Esophagus squamous epithelium (tissue), 5 donors: ENCODE measurements at regions of chr12 and their contacts with region 1.

Region 1: DNA sequence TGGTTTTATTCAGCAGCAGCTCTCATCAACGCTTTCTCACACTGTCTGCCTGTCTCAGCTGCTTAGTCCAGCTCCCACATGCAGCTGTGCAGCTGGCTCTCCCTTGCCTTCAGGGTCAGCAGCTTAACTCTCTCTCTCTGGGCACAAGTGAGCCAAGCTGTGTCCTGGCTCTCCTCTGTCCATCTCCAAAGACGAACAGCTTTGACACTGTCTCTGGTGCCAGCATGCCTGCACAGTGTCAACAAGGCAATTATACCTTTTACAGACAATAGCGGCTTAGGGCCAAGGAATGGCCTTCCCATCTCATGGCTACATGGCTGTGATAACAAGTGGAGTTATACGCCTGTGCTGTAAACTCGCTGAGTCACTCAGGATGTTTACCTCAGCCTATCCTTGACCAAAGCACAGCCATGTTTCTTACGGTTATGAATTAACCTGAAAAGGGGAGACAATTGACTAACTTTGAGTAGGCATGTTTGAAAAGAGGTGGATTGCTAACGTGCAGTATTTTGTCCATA is 38.4 kb upstream of the MANSC4 start:
- DNase-seq: no peak
- H3K4me3 ChIP-seq: no peak overlapping the region
- H3K27ac ChIP-seq: no peak overlapping the region
- H3K4me1 ChIP-seq: peaks cover 0 to 15% (median 0%) of the 10 kb centered on the region in 3 donors
- H3K27me3 ChIP-seq: no peaks in the 10 kb centered on the region
- CTCF ChIP-seq: no peak
- POLR2A ChIP-seq: no peak

Region 2: DNA sequence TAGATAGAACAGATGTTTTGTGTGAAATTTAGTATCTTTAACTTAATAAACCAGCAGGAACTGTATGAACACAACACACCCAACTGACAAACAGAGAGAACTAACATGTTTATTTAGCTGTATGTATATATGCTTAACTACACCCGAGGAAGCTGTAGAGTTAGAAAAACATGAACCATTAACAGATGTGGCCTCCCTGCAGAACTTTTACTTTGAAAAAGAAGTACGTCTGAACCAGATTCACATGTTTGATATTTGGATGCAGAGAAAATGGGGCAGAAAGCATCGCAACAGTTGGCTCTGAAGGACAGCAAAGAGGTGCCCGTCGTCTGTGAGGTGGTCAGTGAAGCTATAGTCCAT is 122.2 kb before region 1 on chr12 and contains the start of gene REP15:
- intact Hi-C with region 1: no loop called
- DNase-seq: no peak
- H3K4me3 ChIP-seq: no peak within 1 kb of the TSS
- H3K27ac ChIP-seq: no peak within 1 kb of the TSS
- H3K4me1 ChIP-seq: no peaks in the 10 kb centered on the region
- H3K27me3 ChIP-seq: no peaks in the 10 kb centered on the region
- CTCF ChIP-seq: no peak
- POLR2A ChIP-seq: no peak
- total RNA-seq, gene REP15: 0.30 to 2.9 (median 1.6) TPM in 3 of 4 donors, not detected in the other

Region 3: DNA sequence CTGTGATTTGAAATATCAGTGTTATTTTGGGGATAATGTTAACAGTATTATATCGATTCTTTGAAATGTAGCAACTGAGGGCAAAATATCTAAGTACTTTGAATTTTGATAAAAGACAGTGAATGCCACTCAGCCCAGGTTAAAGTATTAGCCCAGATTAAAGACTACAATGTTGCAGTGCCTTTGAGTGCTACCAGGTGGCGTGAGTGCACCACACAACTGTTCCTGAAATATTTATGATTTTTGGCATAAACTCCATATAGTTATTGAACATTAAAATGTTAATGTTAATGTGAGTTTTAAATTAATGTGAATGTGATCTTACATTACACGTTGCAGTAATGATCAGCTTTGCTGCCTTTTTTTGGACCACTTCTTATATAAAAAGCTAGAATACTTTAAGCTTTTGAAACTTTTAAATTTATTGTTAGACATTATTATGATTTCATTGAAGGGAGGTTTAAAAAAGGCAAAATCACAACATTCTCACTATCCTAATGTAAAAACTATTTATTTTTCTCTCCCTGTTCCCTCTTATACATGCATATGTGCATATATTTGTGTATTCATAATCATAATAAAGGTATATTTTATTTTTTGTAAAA is 85.3 kb before region 1 on chr12:
- intact Hi-C with region 1: loop called (anchors 5 kb)
- DNase-seq: no peak
- H3K4me3 ChIP-seq: no peak overlapping the region
- H3K27ac ChIP-seq: no peak overlapping the region
- H3K4me1 ChIP-seq: no peaks in the 10 kb centered on the region
- H3K27me3 ChIP-seq: no peaks in the 10 kb centered on the region
- CTCF ChIP-seq: peak; percentile 55 to 92 (median 82)
- POLR2A ChIP-seq: no peak